OCI-LY7 (cell line): ENCODE measurements at regions of chr20 and their contacts with region 1.

Region 1: GRCh38 chr20:49631061-49631788 is 63.3 kb upstream of the PTGIS start:
- DNase-seq: peak; percentile 26
- H3K4me3 ChIP-seq: peak overlapping the region; percentile 59
- H3K27ac ChIP-seq: peak overlapping the region; percentile 91
- H3K4me1 ChIP-seq: peaks cover 97% of the 10 kb centered on the region
- CTCF ChIP-seq: no peak

Region 2: DNA sequence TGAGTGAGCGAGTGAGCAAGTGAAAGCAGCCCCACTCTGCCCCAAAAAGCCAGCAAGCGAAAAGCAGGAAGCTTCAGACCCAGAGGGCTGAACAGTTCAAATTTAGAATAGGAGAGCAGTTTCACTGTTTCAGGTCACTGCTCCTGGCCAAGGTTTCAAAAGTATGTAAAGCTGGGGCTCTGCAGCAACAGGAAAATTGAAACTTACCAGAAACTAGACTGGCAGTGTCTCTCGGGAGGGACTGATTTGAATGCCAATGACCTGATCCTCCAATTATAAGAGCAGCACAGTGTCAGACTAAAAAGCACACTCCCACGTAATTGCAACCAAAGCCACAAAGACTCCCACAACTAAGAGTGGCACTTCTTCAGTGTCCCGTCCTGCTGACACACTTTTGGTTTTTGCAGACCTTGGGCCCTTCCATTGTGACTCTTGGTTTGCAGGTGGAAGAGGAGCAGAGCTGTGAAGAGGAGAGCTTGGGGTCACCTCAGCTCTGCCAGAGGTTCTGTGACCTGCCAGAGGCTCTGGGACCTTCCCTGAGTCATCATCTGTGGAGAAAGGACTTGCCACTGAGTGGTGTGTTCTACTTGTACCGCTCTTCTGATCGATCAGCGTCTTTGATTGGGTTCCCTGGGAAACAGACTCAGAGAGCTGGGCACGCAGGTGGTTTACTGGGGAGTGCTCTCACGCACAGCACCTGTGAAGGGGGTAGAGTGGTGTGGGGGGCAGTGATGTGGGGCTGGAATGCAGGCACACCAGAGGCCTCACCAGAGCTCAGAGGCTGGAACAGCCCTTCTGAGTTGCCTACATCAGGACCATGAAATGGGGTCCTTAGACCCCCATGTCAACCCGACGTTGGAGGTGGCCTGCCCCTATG is 10.6 kb before region 1 on chr20:
- CTCF ChIA-PET with region 1: no interaction called
- POLR2A ChIA-PET with region 1: interaction called, 14 read pairs
- intact Hi-C with region 1: loop called (anchors 1 kb)
- DNase-seq: peak; percentile 92
- H3K4me3 ChIP-seq: peak overlapping the region; percentile 62
- H3K27ac ChIP-seq: peak overlapping the region; percentile 95
- H3K4me1 ChIP-seq: peaks cover 70% of the 10 kb centered on the region
- CTCF ChIP-seq: no peak

Region 3: DNA sequence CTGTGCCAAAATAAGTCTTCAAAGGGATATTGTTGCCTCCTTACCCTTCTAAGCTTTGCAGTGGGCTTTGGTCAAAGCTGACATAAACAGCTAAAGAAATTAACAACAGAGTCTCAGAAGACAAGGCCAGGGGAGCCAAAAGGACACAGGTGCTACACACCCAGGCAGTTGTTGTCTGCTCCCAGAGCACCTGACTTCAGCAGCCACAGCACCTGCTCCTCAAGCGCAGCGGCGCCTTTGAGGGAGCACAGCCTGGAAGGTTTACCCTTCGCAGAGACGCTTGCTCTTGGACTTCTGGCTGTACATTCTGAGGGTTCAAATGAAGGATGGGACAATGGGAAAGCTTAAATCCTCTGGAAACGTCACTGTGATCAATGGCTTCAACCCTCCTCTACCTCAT is 65.8 kb after region 1 on chr20:
- CTCF ChIA-PET with region 1: no interaction called
- POLR2A ChIA-PET with region 1: interaction called, 10 read pairs
- intact Hi-C with region 1: no loop called
- DNase-seq: peak; percentile 56
- H3K4me3 ChIP-seq: no peak overlapping the region
- H3K27ac ChIP-seq: no peak overlapping the region
- H3K4me1 ChIP-seq: peaks cover 88% of the 10 kb centered on the region
- CTCF ChIP-seq: no peak

Region 4: DNA sequence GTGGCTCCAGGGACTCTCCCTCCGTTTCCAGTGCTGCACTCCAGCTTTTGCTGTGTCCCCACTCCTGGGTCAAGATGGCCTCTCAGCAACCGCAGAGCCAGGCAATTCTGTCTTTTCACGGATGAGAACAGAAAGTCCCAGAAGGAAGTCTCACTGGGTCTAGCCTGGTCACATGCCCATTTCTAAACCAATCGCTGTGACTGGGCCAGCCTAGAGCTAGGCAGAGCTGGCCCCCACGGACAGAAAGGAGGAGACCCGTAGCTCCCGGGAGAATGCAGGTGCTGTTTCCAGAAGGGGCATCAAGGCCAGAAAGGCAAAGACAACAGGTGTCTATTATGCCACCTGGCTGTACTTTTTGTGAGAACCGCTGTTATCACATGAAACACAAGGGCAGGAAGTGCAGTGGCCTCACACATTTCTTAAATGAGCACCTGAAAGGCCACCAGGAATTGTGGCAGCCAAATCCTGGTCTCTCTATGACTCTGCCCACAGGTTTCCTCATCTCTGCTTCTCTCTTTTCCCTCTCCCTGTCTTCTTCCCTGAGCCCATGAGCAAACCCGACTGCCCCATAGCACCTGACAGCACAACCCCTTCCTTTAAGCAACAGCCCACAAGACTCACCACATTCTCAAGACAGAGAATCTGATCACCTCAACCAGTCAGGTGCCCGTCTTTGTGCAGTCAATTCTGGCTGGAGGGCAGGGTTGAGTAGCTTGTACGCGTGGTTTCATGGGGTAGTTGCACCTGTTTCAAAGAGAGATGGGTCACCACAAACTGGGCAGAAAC is 119.6 kb after region 1 on chr20:
- CTCF ChIA-PET with region 1: no interaction called
- POLR2A ChIA-PET with region 1: interaction called, 4 read pairs
- intact Hi-C with region 1: loop called (anchors 2 kb)
- DNase-seq: peak; percentile 89
- H3K4me3 ChIP-seq: peak overlapping the region; percentile 51
- H3K27ac ChIP-seq: peak overlapping the region; percentile 91
- H3K4me1 ChIP-seq: peaks cover 52% of the 10 kb centered on the region
- CTCF ChIP-seq: no peak

Region 5: GRCh38 chr20:49821870-49822331 is 190.7 kb after region 1 on chr20:
- CTCF ChIA-PET with region 1: no interaction called
- POLR2A ChIA-PET with region 1: interaction called, 3 read pairs
- intact Hi-C with region 1: loop called (anchors 5 kb)
- DNase-seq: peak; percentile 64
- H3K4me3 ChIP-seq: peak overlapping the region; percentile 33
- H3K27ac ChIP-seq: peak overlapping the region; percentile 91
- H3K4me1 ChIP-seq: peaks cover 43% of the 10 kb centered on the region
- CTCF ChIP-seq: peak; percentile 75